ENCODE measurements at regions of chr4 and their contacts with region 1.

Region 1: GRCh38 chr4:52712172-52712990 is 38.8 kb downstream of the ERVMER34-1 start:
- DNase-seq: peak; percentile 93 to 99
- H3K4me3 ChIP-seq: peak overlapping the region; percentile 85 to 86
- H3K27ac ChIP-seq: peak overlapping the region; percentile 91 to 93
- H3K4me1 ChIP-seq: peaks cover 9 to 16% of the 10 kb centered on the region in 2 donors
- H3K27me3 ChIP-seq: no peaks in the 10 kb centered on the region
- CTCF ChIP-seq: no peak

Region 2: GRCh38 chr4:52051619-52052474 is 660.5 kb before region 1 on chr4:
- intact Hi-C with region 1: loop called (anchors 10 kb)
- DNase-seq: peak in 1 of 2 donors; percentile 81
- H3K4me3 ChIP-seq: peak overlapping the region; percentile 65 to 82
- H3K27ac ChIP-seq: peak overlapping the region; percentile 73 to 77
- H3K4me1 ChIP-seq: no peaks in the 10 kb centered on the region
- H3K27me3 ChIP-seq: no peaks in the 10 kb centered on the region
- CTCF ChIP-seq: no peak

Region 3: DNA sequence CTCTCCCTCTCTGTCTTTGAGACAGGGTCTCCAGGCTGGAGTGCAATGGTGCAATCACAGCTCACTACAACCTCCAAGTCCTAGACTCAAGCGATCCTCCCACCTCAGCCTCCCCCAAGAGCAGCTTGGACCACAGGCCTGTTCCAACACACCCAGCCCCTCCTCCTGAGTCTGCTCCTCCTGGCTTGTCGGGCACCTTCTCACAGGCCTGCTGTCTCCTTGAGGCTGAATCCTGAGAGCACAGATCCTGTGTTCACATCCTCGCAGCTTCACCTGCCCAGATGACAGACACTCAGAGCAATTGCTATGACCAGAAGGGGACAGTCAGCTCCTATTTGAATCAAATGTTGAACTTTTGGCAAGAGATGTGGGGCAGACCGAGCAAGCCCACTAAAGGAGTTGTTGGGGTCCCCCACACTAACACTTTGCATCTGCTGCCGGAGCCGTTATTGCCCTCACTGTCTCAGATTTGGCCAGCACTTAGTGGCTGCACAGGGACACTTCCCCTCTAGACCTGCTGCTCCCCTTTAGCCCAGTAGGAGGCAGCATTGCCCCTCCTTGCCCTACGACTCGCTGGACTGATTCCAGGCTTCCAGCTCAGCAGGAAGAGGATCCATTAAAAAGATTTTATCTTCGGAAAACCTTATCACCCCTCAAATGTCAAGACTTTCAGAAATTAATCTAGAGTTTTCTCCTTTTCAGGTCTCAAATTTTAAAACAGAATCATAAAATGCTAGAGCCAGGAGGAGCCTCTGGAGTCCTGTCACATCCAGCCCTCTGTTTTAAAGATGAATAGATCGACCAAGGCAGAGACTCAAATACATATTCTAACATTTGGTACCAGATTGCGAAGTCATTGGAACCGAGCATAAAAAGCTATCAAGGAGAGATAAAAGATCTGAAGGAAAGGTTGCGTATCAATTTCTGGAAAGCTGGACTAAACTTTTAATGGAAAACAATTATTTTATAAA is 167.0 kb before region 1 on chr4:
- intact Hi-C with region 1: loop called (anchors 10 kb)
- DNase-seq: peak in 1 of 2 donors; percentile 83
- H3K4me3 ChIP-seq: no peak overlapping the region
- H3K27ac ChIP-seq: no peak overlapping the region
- H3K4me1 ChIP-seq: no peaks in the 10 kb centered on the region
- H3K27me3 ChIP-seq: no peaks in the 10 kb centered on the region
- CTCF ChIP-seq: peak; percentile 85 to 92 (median 88)

Region 4: GRCh38 chr4:52861879-52862616 is 149.7 kb after region 1 on chr4 and contains the start of gene RASL11B:
- intact Hi-C with region 1: loop called (anchors 5 kb)
- DNase-seq: peak; percentile 20 to 90
- H3K4me3 ChIP-seq: peak within 1 kb of the TSS; percentile 72 to 80
- H3K27ac ChIP-seq: peak within 1 kb of the TSS; percentile 68 to 79
- H3K4me1 ChIP-seq: peaks cover 0 to 17% of the 10 kb centered on the region in 2 donors
- H3K27me3 ChIP-seq: no peaks in the 10 kb centered on the region
- CTCF ChIP-seq: peak in 2 of 3 experiments; percentile 24 to 43
- total RNA-seq, gene RASL11B: not detected

Measured in ascending aorta (tissue), 2 donors.